AG04450 (cell line): ENCODE measurements at regions of chr6 and their contacts with region 1.

Region 1: DNA sequence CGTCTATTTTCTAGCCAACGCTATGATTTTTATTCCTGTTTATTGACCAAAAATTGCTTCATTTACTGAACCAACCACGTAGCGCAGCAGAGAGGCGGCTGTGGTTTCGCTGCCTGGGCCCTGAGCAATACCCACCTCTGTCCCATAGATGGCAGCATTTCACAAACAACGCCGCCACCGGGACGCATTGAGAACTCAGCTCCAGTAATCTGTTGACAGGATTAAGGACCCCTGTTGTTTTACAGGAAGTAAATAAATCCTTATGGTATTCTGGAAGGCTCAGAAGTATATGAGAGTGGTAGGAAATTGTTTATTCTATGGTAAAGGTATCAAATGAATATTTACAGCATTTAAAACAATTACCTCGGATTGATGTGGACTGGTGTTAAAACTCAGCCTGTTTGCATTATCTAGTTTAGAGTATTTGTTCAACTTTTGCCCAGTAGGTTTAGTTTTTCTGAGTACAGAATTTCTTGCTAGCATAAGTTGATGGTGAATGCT is 547.9 kb upstream of the SLC35B3 start:
- DNase-seq: peak; percentile 16
- H3K4me3 ChIP-seq: no peak overlapping the region
- H3K27ac ChIP-seq: no peak overlapping the region
- H3K27me3 ChIP-seq: no peaks in the 10 kb centered on the region
- CTCF ChIP-seq: peak; percentile 97

Region 2: GRCh38 chr6:8785223-8785622 is 198.0 kb before region 1 on chr6:
- CTCF ChIA-PET with region 1: no interaction called
- POLR2A ChIA-PET with region 1: no interaction called
- DNase-seq: no peak
- H3K4me3 ChIP-seq: no peak overlapping the region
- H3K27ac ChIP-seq: no peak overlapping the region
- H3K27me3 ChIP-seq: no peaks in the 10 kb centered on the region
- CTCF ChIP-seq: no peak

Region 3: DNA sequence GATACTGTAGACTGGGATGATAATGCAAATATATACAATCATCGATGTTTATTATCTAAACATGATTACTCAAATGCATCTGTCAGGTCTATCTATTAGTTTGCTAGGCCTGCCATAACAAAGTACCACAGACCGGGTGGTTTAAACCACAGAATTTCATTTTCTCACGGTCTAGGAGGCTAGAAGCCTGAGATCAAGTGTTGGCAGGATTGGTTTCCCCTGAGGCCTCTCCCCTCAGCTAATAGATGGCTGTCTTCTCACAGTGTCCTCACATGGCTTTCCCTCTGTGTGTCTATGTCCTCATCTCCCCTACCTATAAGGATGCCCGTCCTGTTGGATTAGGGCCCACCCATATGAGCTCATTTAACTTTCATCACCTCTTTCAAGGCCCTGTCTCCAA is 35.3 kb before region 1 on chr6:
- CTCF ChIA-PET with region 1: no interaction called
- POLR2A ChIA-PET with region 1: no interaction called
- DNase-seq: no peak
- H3K4me3 ChIP-seq: no peak overlapping the region
- H3K27ac ChIP-seq: no peak overlapping the region
- H3K27me3 ChIP-seq: no peaks in the 10 kb centered on the region
- CTCF ChIP-seq: no peak

Region 4: DNA sequence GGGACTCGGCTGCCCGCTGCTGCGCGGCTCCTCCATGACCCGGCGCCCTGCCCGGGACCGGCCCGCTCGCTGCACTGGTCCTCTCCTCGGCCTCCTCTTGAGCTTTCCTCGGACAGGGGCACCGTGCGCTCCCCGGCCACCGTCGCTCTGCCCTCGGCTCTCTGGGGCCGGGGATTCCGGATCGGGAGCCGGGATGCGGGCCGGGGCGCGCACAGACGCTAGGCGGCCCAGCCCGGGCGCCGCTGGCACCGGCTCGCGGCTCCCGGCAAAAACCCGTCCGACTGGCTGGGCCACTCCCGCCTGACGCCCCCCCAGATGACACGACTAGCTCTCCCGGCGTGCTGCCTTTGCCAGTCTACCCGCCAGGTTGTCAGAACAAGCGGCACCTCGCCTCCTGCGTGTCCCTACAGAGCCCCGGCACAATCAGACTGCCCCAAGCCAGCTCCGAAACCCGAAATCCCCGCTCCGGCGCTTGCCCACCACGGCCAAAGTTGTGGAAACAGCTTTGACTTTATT is 1429.6 kb after region 1 on chr6:
- CTCF ChIA-PET with region 1: interaction called, 10 read pairs
- POLR2A ChIA-PET with region 1: interaction called, 3 read pairs
- DNase-seq: no peak
- H3K4me3 ChIP-seq: peak overlapping the region; percentile 63
- H3K27ac ChIP-seq: no peak overlapping the region
- H3K27me3 ChIP-seq: peaks cover 84% of the 10 kb centered on the region
- CTCF ChIP-seq: no peak

Region 5: DNA sequence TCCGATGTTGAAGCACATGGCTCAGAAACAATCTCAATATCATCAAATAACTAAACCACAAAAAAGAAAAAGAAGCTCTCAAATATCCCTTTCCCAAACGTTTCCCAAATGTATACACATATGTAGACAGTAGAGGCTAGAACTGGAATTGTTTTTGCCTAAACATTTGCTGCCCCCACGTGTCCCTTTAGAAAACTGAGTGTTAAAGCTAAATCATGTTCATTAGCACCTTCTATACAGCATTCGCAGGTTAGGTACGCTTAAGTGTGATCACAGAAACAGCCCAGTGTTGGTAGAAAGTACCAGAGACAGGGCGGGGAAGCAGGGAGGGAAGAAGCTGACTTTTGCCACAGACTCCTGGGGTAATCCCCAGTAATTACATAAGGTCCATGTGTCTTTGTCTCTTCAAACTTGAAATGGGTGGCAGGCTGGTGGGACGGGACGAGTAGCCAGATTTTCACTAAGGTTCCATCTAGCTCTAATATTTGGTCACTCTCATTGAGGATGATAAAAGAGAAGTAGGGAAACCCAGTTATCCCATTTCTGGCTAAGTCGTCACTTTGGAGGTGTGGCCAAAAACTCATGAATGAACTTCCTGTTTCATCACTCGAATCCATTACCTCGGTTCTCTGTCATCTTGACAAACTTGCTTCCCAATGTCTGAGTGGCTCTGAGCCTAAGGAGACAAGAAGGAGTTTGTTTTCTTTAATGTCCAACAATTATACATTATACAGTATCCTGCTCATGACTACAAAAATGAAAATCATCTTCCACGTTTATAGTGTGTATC is 1446.6 kb after region 1 on chr6:
- CTCF ChIA-PET with region 1: interaction called, 35 read pairs
- POLR2A ChIA-PET with region 1: no interaction called
- DNase-seq: no peak
- H3K4me3 ChIP-seq: no peak overlapping the region
- H3K27ac ChIP-seq: no peak overlapping the region
- H3K27me3 ChIP-seq: peaks cover 10% of the 10 kb centered on the region
- CTCF ChIP-seq: peak; percentile 62

Region 6: DNA sequence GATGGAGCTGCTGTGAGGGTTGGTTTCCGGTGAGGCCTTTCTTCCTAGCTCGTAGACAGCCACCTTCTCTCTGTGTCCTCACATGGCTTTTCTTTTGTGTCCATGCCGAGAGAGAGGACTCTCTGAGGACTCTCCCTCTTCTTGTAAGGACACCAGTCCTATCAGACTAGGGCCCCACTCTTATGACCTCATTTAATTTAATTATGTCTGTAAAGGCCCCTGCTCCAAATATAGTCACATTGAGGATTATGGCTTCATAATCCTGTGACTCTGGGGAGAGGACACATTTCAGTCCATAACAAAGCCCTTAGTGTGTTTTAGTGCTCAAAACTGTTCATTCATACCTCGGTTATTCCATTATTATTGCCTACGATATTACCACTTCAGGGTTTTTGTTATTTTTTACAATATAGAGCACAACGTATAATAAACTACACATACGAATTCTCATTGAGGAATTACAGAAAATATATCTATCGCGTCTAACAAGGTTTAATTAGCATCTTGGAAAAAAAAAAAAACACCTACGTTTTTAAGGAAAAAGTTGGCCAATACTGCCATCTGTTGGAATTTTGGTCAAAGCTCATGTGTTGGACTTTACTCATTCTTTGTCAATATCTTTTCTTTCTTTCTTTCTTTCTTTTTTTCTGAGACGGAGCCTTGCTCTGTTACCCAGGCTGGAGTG is 1451.6 kb after region 1 on chr6:
- CTCF ChIA-PET with region 1: interaction called, 35 read pairs
- POLR2A ChIA-PET with region 1: no interaction called
- DNase-seq: no peak
- H3K4me3 ChIP-seq: no peak overlapping the region
- H3K27ac ChIP-seq: no peak overlapping the region
- H3K27me3 ChIP-seq: no peaks in the 10 kb centered on the region
- CTCF ChIP-seq: peak; percentile 57